H1 (cell line): ENCODE measurements at regions of chr10 and their contacts with region 1.

Region 1: GRCh38 chr10:112307358-112308124 is 24.3 kb downstream of the TECTB start:
- DNase-seq: peak; percentile 59 to 79
- H3K4me3 ChIP-seq: no peak overlapping the region
- H3K27ac ChIP-seq: no peak overlapping the region
- H3K4me1 ChIP-seq: peaks cover 0 to 3% (median under 1%) of the 10 kb centered on the region in 4 experiments; a peak in 2 of 7 replicates
- H3K27me3 ChIP-seq: no peaks in the 10 kb centered on the region
- CTCF ChIP-seq: peak; percentile 81 to 95 (median 85)
- EP300 ChIP-seq: no peak
- POLR2A ChIP-seq: no peak
- RAD21 ChIP-seq: peak; percentile 91 to 93

Region 2: GRCh38 chr10:112059220-112059619 is 248.3 kb before region 1 on chr10:
- CTCF ChIA-PET with region 1: no interaction called
- POLR2A ChIA-PET with region 1: no interaction called
- DNase-seq: no peak
- H3K4me3 ChIP-seq: no peak overlapping the region
- H3K27ac ChIP-seq: no peak overlapping the region
- H3K4me1 ChIP-seq: no peaks in the 10 kb centered on the region
- H3K27me3 ChIP-seq: no peaks in the 10 kb centered on the region
- CTCF ChIP-seq: peak; percentile 20 to 44 (median 41)
- EP300 ChIP-seq: no peak
- POLR2A ChIP-seq: no peak
- RAD21 ChIP-seq: peak; percentile 31 to 49

Region 3: GRCh38 chr10:112160834-112161233 is 146.7 kb before region 1 on chr10:
- CTCF ChIA-PET with region 1: interaction called, 14 read pairs
- POLR2A ChIA-PET with region 1: no interaction called
- DNase-seq: no peak
- H3K4me3 ChIP-seq: no peak overlapping the region
- H3K27ac ChIP-seq: no peak overlapping the region
- H3K4me1 ChIP-seq: no peaks in the 10 kb centered on the region
- H3K27me3 ChIP-seq: no peaks in the 10 kb centered on the region
- CTCF ChIP-seq: no peak
- EP300 ChIP-seq: no peak
- POLR2A ChIP-seq: no peak
- RAD21 ChIP-seq: no peak

Region 4: GRCh38 chr10:112183329-112184051 is 124.1 kb before region 1 on chr10 and contains the start of gene GPAM:
- CTCF ChIA-PET with region 1: interaction called, 53 read pairs
- POLR2A ChIA-PET with region 1: interaction called, 4 read pairs
- DNase-seq: peak; percentile 66 to 100
- H3K4me3 ChIP-seq: peak within 1 kb of the TSS; percentile 86 to 99 (median 91)
- H3K27ac ChIP-seq: peak within 1 kb of the TSS; percentile 88
- H3K4me1 ChIP-seq: peaks cover 0 to 7% (median 3%) of the 10 kb centered on the region in 4 experiments; a peak in 5 of 7 replicates
- H3K27me3 ChIP-seq: no peaks in the 10 kb centered on the region
- CTCF ChIP-seq: 0 out of 4 replicates have a peak, but pooled peaks of 1 of the 3 experiments have one; percentile 2
- EP300 ChIP-seq: peak in 1 of 2 experiments; percentile 77; a peak in 1 of 3 replicates
- POLR2A ChIP-seq: peak; percentile 61 to 93
- RAD21 ChIP-seq: peak; percentile 18 to 33; a peak in 2 of 4 replicates
- total RNA-seq, gene GPAM: 15.5 and 18.5 TPM in 2 replicates

Region 5: DNA sequence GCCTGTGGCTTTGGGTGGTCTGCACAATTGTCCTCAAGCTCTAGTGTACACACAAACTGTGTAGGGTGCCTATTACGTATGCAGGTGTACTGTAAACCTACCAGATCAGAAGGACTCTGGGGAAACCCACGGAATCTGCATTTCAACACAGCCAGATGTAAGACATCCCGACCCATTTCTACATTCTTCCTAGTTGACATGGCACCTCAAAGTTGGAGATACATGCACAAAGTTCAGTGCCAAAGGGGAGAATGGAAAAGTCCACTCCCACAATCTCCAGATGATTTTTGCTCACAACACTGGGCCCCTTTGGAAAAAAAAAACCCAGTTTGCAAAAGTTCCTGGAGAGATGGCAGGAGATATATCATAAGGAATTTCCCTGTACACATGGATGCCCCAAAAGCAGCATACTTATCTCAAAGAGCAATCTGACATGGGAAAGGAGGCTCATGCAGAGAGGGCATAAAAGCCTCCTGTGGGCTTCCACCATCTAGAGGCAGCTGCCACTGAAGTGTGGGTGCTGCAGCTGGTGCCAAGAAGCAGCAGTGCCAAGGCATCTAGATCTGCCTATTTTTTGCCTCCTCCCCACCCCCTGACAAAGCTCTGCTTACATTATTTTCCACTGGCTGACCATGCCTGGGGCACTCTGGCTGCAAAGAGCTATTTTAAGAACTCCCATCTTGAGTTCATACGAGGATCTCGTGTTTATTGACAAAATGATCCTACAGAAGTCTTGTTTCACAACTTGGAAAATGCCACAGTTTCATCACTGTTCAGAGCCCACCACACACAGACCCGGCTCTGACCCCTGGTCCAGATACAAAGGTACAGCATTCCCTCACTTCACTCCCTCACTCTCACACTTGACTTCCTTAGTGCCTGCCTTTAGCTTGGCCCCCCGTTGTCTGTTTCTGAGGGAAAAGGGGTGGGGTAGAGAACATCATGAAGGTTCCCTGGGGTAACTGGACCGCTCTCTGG is 11.4 kb before region 1 on chr10:
- CTCF ChIA-PET with region 1: interaction called, 29 read pairs
- POLR2A ChIA-PET with region 1: no interaction called
- DNase-seq: no peak
- H3K4me3 ChIP-seq: no peak overlapping the region
- H3K27ac ChIP-seq: no peak overlapping the region
- H3K4me1 ChIP-seq: no peaks in the 10 kb centered on the region
- H3K27me3 ChIP-seq: no peaks in the 10 kb centered on the region
- CTCF ChIP-seq: no peak
- EP300 ChIP-seq: no peak
- POLR2A ChIP-seq: no peak
- RAD21 ChIP-seq: no peak

Region 6: GRCh38 chr10:112409755-112410154 is 102.2 kb after region 1 on chr10:
- CTCF ChIA-PET with region 1: interaction called, 11 read pairs
- POLR2A ChIA-PET with region 1: no interaction called
- DNase-seq: no peak
- H3K4me3 ChIP-seq: no peak overlapping the region
- H3K27ac ChIP-seq: no peak overlapping the region
- H3K4me1 ChIP-seq: no peaks in the 10 kb centered on the region
- H3K27me3 ChIP-seq: no peaks in the 10 kb centered on the region
- CTCF ChIP-seq: no peak
- EP300 ChIP-seq: no peak
- POLR2A ChIP-seq: no peak
- RAD21 ChIP-seq: no peak

Region 7: GRCh38 chr10:112446855-112447711 is 139.5 kb after region 1 on chr10 and contains the starts of genes VTI1A and ZDHHC6:
- CTCF ChIA-PET with region 1: no interaction called
- POLR2A ChIA-PET with region 1: no interaction called
- DNase-seq: peak; percentile 43 to 83
- H3K4me3 ChIP-seq: peak within 1 kb of the TSS; percentile 85 to 99 (median 96)
- H3K27ac ChIP-seq: peak within 1 kb of the TSS; percentile 94
- H3K4me1 ChIP-seq: no peaks in the 10 kb centered on the region; a peak in 1 of 7 replicates
- H3K27me3 ChIP-seq: no peaks in the 10 kb centered on the region
- CTCF ChIP-seq: peak in 1 of 3 experiments; percentile 22; a peak in 1 of 4 replicates
- EP300 ChIP-seq: no peak
- POLR2A ChIP-seq: peak; percentile 81 to 88; a peak in 2 of 3 replicates
- RAD21 ChIP-seq: no peak
- total RNA-seq, gene VTI1A: 18.5 and 20.0 TPM in 2 replicates
- total RNA-seq, gene ZDHHC6: 21.0 and 27.4 TPM in 2 replicates